GM10248 (cell line): ENCODE measurements at regions of chr3 and their contacts with region 1.

Region 1: DNA sequence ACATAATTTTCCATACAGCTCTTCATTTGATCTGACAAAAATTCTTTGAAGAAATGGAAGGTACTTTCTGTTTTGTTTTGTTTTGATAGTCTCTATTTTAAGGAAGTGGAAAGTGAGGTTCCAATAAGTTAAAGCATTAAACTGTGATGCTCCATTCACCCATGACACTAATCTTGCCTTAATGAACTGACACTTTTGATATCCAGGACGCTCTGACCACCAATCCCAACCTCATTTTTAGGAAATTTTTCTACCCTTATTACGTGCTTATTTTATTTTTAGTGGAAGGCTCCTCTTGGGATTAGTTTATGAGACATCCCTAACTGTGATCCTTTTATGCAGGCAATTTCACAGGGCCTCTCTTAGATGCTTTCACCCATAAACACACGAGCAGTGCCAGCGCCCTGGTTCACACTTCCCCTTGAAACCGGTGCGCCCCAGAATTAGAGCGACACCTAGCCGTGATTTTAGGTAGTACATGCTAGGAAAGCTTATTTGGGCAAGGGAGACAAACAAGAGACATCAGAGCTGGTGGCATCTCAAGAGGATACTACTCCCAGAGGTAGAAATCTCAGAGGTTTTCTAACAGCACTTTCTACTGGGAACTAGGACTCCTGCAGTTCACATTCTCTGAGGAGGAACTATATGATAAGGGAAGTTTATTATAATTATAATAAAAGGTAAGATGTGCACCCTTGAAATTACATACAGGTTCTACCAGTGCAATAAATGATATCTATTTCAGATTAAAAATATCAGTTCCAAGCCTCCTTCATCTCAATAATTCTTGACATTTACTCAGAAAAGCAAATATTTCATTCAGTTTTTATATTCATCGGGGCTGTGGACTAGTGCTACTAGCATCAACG is 173.9 kb downstream of the SLC9A9 start:
- DNase-seq: peak; percentile 73
- CTCF ChIP-seq: peak; percentile 89

Region 2: GRCh38 chr3:143482106-143483088 is 191.9 kb before region 1 on chr3:
- CTCF ChIA-PET with region 1: interaction called, 11 read pairs
- POLR2A ChIA-PET with region 1: no interaction called
- DNase-seq: no peak
- CTCF ChIP-seq: no peak

Region 3: GRCh38 chr3:143531101-143531500 is 143.2 kb before region 1 on chr3:
- CTCF ChIA-PET with region 1: interaction called, 10 read pairs
- POLR2A ChIA-PET with region 1: no interaction called
- DNase-seq: no peak
- CTCF ChIP-seq: no peak

Region 4: DNA sequence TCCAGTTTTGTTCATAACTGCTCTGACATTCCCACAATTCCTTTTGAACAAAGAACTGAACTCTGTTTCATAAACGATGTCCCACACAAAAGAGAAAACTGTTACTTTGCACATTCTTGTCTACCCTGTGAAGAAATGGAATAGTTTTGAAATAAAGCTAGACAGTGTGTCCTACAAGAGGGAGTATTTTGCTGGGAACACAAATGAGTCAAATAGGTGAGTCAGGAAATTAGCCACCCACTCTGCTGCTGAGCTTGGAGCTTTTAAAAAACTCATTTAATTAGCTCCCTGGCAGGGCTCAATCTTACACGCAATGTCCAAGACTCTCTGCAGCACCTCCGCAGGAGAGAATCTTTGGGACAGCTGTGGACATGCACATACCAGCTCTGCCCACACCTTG is 19.4 kb before region 1 on chr3:
- CTCF ChIA-PET with region 1: interaction called, 17 read pairs
- POLR2A ChIA-PET with region 1: no interaction called
- DNase-seq: no peak
- CTCF ChIP-seq: no peak

Region 5: GRCh38 chr3:143685491-143685890 is 11.2 kb after region 1 on chr3:
- CTCF ChIA-PET with region 1: interaction called, 22 read pairs
- POLR2A ChIA-PET with region 1: no interaction called
- DNase-seq: no peak
- CTCF ChIP-seq: no peak

Region 6: GRCh38 chr3:143736205-143736997 is 62.1 kb after region 1 on chr3:
- CTCF ChIA-PET with region 1: no interaction called
- POLR2A ChIA-PET with region 1: no interaction called
- DNase-seq: no peak
- CTCF ChIP-seq: no peak